Endothelial cell of umbilical vein (primary cell): ENCODE measurements at regions of chr12 and their contacts with region 1.

Region 1: GRCh38 chr12:50055831-50056638 is 1.4 kb upstream of the ASIC1 start:
- DNase-seq: peak; percentile 59
- H3K4me3 ChIP-seq: no peak overlapping the region
- H3K27ac ChIP-seq: no peak overlapping the region
- H3K4me1 ChIP-seq: peaks cover 5% of the 10 kb centered on the region
- H3K27me3 ChIP-seq: peaks cover 54 to 56% of the 10 kb centered on the region in 2 experiments
- CTCF ChIP-seq: peak; percentile 95 to 96
- POLR2A ChIP-seq: no peak

Region 2: GRCh38 chr12:49776413-49776812 is 279.6 kb before region 1 on chr12:
- CTCF ChIA-PET with region 1: no interaction called
- POLR2A ChIA-PET with region 1: interaction called, 5 read pairs
- dilution Hi-C with region 1: no loop called
- intact Hi-C with region 1: loop called (anchors 2 kb)
- DNase-seq: peak; percentile 68
- H3K4me3 ChIP-seq: no peak overlapping the region
- H3K27ac ChIP-seq: no peak overlapping the region
- H3K4me1 ChIP-seq: no peaks in the 10 kb centered on the region
- H3K27me3 ChIP-seq: peaks cover 0 to 2% of the 10 kb centered on the region in 2 experiments
- CTCF ChIP-seq: peak; percentile 77 to 79
- POLR2A ChIP-seq: no peak

Region 3: GRCh38 chr12:49866859-49867579 is 189.0 kb before region 1 on chr12:
- CTCF ChIA-PET with region 1: interaction called, 51 read pairs
- POLR2A ChIA-PET with region 1: no interaction called
- dilution Hi-C with region 1: no loop called
- intact Hi-C with region 1: loop called (anchors 1 kb)
- DNase-seq: peak; percentile 42
- H3K4me3 ChIP-seq: no peak overlapping the region
- H3K27ac ChIP-seq: no peak overlapping the region
- H3K4me1 ChIP-seq: peaks cover 20% of the 10 kb centered on the region
- H3K27me3 ChIP-seq: peaks cover 2 to 7% of the 10 kb centered on the region in 2 experiments
- CTCF ChIP-seq: peak; percentile 91 to 97
- POLR2A ChIP-seq: no peak

Region 4: GRCh38 chr12:49974231-49974675 is 81.8 kb before region 1 on chr12:
- CTCF ChIA-PET with region 1: interaction called, 317 read pairs
- POLR2A ChIA-PET with region 1: no interaction called
- dilution Hi-C with region 1: loop called (anchors 25 kb)
- intact Hi-C with region 1: loop called (anchors 1 kb)
- DNase-seq: peak; percentile 47
- H3K4me3 ChIP-seq: no peak overlapping the region
- H3K27ac ChIP-seq: no peak overlapping the region
- H3K4me1 ChIP-seq: no peaks in the 10 kb centered on the region
- H3K27me3 ChIP-seq: peaks cover 7 to 9% of the 10 kb centered on the region in 2 experiments
- CTCF ChIP-seq: peak; percentile 53 to 80
- POLR2A ChIP-seq: no peak

Region 5: GRCh38 chr12:49983892-49984291 is 72.1 kb before region 1 on chr12:
- CTCF ChIA-PET with region 1: interaction called, 12 read pairs
- POLR2A ChIA-PET with region 1: no interaction called
- dilution Hi-C with region 1: no loop called
- intact Hi-C with region 1: no loop called
- DNase-seq: peak; percentile 87
- H3K4me3 ChIP-seq: no peak overlapping the region
- H3K27ac ChIP-seq: peak overlapping the region; percentile 24
- H3K4me1 ChIP-seq: peaks cover 14% of the 10 kb centered on the region
- H3K27me3 ChIP-seq: no peaks in the 10 kb centered on the region
- CTCF ChIP-seq: no peak
- POLR2A ChIP-seq: no peak

Region 6: GRCh38 chr12:50043854-50044253 is 12.2 kb before region 1 on chr12:
- CTCF ChIA-PET with region 1: interaction called, 191 read pairs
- POLR2A ChIA-PET with region 1: no interaction called
- dilution Hi-C with region 1: no loop called
- intact Hi-C with region 1: loop called (anchors 1 kb)
- DNase-seq: no peak
- H3K4me3 ChIP-seq: no peak overlapping the region
- H3K27ac ChIP-seq: no peak overlapping the region
- H3K4me1 ChIP-seq: no peaks in the 10 kb centered on the region
- H3K27me3 ChIP-seq: peaks cover 7 to 10% of the 10 kb centered on the region in 2 experiments
- CTCF ChIP-seq: no peak
- POLR2A ChIP-seq: no peak

Region 7: GRCh38 chr12:50066433-50066832 is 10.4 kb after region 1 on chr12:
- CTCF ChIA-PET with region 1: interaction called, 41 read pairs
- POLR2A ChIA-PET with region 1: no interaction called
- dilution Hi-C with region 1: no loop called
- intact Hi-C with region 1: no loop called
- DNase-seq: no peak
- H3K4me3 ChIP-seq: no peak overlapping the region
- H3K27ac ChIP-seq: no peak overlapping the region
- H3K4me1 ChIP-seq: peaks cover 4% of the 10 kb centered on the region
- H3K27me3 ChIP-seq: peaks cover 25 to 26% of the 10 kb centered on the region in 2 experiments
- CTCF ChIP-seq: no peak
- POLR2A ChIP-seq: no peak

Region 8: DNA sequence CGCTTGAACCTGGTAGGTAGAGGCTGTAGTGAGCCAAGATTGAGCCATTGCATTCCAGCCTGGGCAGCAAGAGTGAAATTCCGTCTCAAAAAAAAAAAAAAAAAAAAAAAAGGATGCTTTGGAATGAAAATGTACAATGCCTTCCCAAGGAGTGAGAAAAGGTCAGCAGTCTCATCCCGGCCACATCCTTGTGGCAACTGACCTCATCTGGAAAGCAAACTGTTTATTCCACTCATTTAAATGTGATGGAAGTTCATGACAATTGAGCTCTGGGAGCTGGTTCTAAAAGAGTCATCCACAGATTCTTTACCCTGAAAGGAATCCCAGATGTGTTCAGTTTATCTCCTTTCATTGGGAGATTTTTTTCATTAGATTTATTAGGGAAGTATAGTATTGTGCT is 246.7 kb after region 1 on chr12:
- CTCF ChIA-PET with region 1: no interaction called
- POLR2A ChIA-PET with region 1: no interaction called
- dilution Hi-C with region 1: no loop called
- intact Hi-C with region 1: no loop called
- DNase-seq: no peak
- H3K4me3 ChIP-seq: no peak overlapping the region
- H3K27ac ChIP-seq: no peak overlapping the region
- H3K4me1 ChIP-seq: no peaks in the 10 kb centered on the region
- H3K27me3 ChIP-seq: no peaks in the 10 kb centered on the region
- CTCF ChIP-seq: no peak
- POLR2A ChIP-seq: no peak